PC-9 (cell line): ENCODE measurements at regions of chr12 and their contacts with region 1.

Region 1: DNA sequence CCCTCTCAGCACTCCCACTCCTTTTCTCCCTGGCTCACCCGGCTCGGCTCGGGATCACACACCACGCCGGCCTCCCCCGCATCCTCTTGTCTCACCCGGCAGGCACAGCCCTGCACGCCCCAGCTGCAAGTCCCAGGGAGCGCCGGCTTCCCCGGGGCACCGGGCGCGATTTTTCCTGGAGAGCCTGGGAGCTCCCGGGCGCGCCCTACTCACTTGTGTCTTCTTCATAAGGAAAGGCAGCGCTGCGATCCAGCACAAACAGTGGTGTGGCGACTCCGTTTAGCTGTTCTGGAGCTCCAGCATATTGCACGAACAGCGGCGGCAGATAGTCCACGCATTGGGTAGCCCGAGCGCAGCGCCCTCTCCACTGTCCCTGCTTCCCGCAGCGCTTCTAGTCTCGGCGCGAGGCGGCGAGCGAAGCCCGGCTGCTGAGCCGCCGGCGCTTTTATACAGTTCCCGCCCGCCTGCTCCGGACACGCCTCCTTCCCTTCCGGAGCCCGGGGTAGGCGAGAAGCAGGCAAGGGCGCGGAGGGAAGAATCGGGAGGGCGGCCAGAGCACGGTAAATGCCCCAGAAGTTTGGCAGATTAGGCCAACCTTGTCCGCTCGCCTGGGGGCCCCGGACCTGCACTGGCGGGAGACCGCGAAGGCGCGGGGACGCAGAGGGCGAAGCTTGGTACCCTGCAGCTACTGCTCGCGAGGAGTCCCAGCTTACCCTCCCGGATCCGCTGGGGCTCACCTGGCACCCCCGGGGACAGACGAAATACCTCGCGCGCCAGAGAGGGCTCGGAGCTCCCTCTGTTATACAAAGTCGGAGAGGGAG is at the start of gene KITLG:
- DNase-seq: peak; percentile 52 to 89
- H3K4me3 ChIP-seq: peak within 1 kb of the TSS; percentile 67
- H3K27ac ChIP-seq: no peak within 1 kb of the TSS
- H3K4me1 ChIP-seq: peaks cover 13% of the 10 kb centered on the region
- H3K27me3 ChIP-seq: no peaks in the 10 kb centered on the region
- CTCF ChIP-seq: no peak
- total RNA-seq, gene KITLG: 15.8 and 17.4 TPM in 2 replicates

Region 2: GRCh38 chr12:88141770-88142609 is 438.3 kb before region 1 on chr12 and contains the starts of genes CEP290 and TMTC3:
- CTCF ChIA-PET with region 1: no interaction called
- POLR2A ChIA-PET with region 1: no interaction called
- intact Hi-C with region 1: loop called (anchors 5 kb)
- DNase-seq: peak; percentile 93 to 99
- H3K4me3 ChIP-seq: peak within 1 kb of the TSS; percentile 93
- H3K27ac ChIP-seq: peak within 1 kb of the TSS; percentile 59
- H3K4me1 ChIP-seq: peaks cover 13% of the 10 kb centered on the region
- H3K27me3 ChIP-seq: no peaks in the 10 kb centered on the region
- CTCF ChIP-seq: no peak
- total RNA-seq, gene CEP290: 21.9 and 22.2 TPM in 2 replicates
- total RNA-seq, gene TMTC3: 23.3 and 26.4 TPM in 2 replicates

Region 3: DNA sequence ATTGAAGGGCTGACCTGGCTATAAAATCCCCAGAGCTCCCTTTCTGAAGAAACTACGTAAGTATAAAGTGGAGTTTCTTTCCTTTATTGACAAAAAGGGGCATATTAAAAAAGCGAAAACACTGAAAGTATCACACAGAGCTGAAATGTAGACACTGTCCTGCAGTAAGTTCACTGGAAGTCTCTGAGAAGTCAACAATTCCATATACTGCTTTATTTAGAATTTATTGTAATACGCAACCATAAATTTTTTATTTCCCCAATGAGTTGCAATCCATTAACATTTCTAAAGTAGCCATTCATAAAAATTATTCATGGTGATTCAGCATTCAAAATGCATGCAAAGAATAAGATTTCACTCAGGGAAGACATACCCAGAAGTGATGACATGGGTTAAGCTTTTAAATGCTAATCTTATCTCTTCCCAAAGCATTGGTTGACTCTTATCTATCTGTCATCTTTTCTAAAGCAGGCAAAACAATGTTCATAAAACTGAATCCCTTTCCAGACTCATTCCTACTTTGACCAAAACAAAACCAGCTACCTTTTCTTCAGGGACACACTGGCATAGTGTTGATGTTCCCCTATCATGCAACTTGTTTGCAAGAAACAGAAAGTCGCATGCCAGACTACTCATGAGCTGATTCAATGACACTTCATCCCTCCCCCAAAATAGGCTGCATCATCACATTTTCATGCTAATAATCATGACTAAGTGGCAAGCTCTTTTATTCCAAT is 17.2 kb before region 1 on chr12:
- CTCF ChIA-PET with region 1: no interaction called
- POLR2A ChIA-PET with region 1: interaction called, 11 read pairs
- intact Hi-C with region 1: no loop called
- DNase-seq: no peak
- H3K4me3 ChIP-seq: no peak overlapping the region
- H3K27ac ChIP-seq: no peak overlapping the region
- H3K4me1 ChIP-seq: no peaks in the 10 kb centered on the region
- H3K27me3 ChIP-seq: no peaks in the 10 kb centered on the region
- CTCF ChIP-seq: no peak

Region 4: DNA sequence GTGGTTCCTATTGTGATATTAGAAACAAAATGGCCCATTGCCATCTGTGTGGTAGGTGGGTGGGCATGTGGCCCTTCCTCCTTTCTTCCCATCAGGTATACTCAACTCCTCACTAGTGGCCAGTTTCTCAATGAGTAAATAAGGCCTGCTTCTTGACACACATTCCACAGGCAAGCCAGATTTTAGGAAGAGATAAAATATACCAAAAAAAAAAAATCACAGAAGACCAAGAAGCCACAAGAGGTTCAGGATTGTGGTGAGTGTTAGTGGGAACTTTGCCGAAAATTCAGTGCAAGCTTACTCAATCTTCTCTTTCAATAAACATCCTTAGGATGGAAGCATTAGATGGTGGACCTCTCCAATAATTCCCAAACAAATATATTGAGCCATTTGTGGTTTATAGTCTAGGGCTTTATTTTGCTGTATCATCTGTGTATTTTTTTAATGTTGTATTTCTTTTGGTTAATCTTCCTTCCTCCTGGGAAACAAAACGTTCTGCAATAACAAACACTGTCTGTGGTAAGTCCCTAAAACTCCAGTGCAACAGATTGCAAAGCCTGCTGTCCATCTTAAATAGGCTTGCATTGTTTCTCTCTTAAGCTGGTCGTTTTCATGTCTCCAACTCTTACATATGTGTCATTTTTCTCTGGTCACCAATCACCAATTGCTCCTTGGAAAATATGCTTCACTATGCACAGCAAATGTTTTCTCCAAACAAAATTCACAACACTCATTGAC is 289.9 kb after region 1 on chr12:
- CTCF ChIA-PET with region 1: no interaction called
- POLR2A ChIA-PET with region 1: no interaction called
- intact Hi-C with region 1: no loop called
- DNase-seq: no peak
- H3K4me3 ChIP-seq: no peak overlapping the region
- H3K27ac ChIP-seq: no peak overlapping the region
- H3K4me1 ChIP-seq: 0 out of 2 replicates have a peak, but pooled peaks cover 7% of the 10 kb centered on the region
- H3K27me3 ChIP-seq: no peaks in the 10 kb centered on the region
- CTCF ChIP-seq: no peak

Region 5: GRCh38 chr12:88922816-88923215 is 342.6 kb after region 1 on chr12:
- CTCF ChIA-PET with region 1: no interaction called
- POLR2A ChIA-PET with region 1: no interaction called
- intact Hi-C with region 1: loop called (anchors 5 kb)
- DNase-seq: no peak
- H3K4me3 ChIP-seq: no peak overlapping the region
- H3K27ac ChIP-seq: no peak overlapping the region
- H3K4me1 ChIP-seq: peaks cover 26% of the 10 kb centered on the region
- H3K27me3 ChIP-seq: no peaks in the 10 kb centered on the region
- CTCF ChIP-seq: no peak